WTC11 (cell line): ENCODE measurements at regions of chr21 and their contacts with region 1.

Region 1: GRCh38 chr21:45140346-45140940 is 66.1 kb downstream of the ADARB1 start:
- DNase-seq: peak; percentile 85
- ATAC-seq: peak; percentile 95
- H3K4me3 Mint-ChIP-seq: no peak overlapping the region
- H3K27ac Mint-ChIP-seq: no peak overlapping the region
- H3K4me1 Mint-ChIP-seq: peaks cover 3% of the 10 kb centered on the region; the same call in 1 of the 2 replicates
- H3K27me3 Mint-ChIP-seq: no peaks in the 10 kb centered on the region
- CTCF ChIP-seq: peak; percentile 54; the same call in 1 of the 2 replicates

Region 2: DNA sequence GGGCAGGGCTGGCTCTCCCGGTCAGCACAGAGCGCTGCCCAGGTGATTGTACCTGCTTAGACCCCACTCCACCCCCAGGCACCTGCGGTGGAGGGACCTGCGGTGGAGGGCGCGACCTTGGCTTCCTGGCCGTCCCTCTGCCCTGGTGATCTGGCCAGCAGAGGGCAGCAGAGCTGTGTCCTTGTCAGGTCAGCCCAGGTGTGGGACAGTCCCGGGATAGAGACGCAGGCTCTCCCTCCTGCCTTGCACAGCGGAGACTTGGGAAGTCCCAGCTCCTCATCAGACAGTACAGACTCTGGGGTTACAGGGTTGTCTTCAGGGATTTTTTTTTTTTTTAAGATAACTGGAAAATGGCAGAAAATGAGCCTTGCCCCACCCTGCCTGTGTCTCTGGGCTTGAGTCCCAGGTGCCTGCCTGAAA is 190.7 kb before region 1 on chr21:
- CTCF ChIA-PET with region 1: interaction called, 58 read pairs
- POLR2A ChIA-PET with region 1: no interaction called
- DNase-seq: peak; percentile 97
- ATAC-seq: peak; percentile 94
- H3K4me3 Mint-ChIP-seq: no peak overlapping the region
- H3K27ac Mint-ChIP-seq: peak overlapping the region; percentile 45; the same call in 1 of the 2 replicates
- H3K4me1 Mint-ChIP-seq: 0 out of 2 replicates have a peak, but pooled peaks cover 2% of the 10 kb centered on the region
- H3K27me3 Mint-ChIP-seq: no peaks in the 10 kb centered on the region
- CTCF ChIP-seq: peak; percentile 88

Region 3: GRCh38 chr21:45050786-45051489 is 89.5 kb before region 1 on chr21:
- CTCF ChIA-PET with region 1: interaction called, 14 read pairs
- POLR2A ChIA-PET with region 1: no interaction called
- DNase-seq: no peak
- ATAC-seq: no peak
- H3K4me3 Mint-ChIP-seq: no peak overlapping the region
- H3K27ac Mint-ChIP-seq: no peak overlapping the region
- H3K4me1 Mint-ChIP-seq: peaks cover 18% of the 10 kb centered on the region
- H3K27me3 Mint-ChIP-seq: peaks cover 14% of the 10 kb centered on the region
- CTCF ChIP-seq: no peak

Region 4: GRCh38 chr21:45120975-45121374 is 19.5 kb before region 1 on chr21:
- CTCF ChIA-PET with region 1: interaction called, 27 read pairs
- POLR2A ChIA-PET with region 1: no interaction called
- DNase-seq: no peak
- ATAC-seq: no peak
- H3K4me3 Mint-ChIP-seq: no peak overlapping the region
- H3K27ac Mint-ChIP-seq: no peak overlapping the region
- H3K4me1 Mint-ChIP-seq: peaks cover 2% of the 10 kb centered on the region; the same call in 1 of the 2 replicates
- H3K27me3 Mint-ChIP-seq: no peaks in the 10 kb centered on the region
- CTCF ChIP-seq: no peak

Region 5: DNA sequence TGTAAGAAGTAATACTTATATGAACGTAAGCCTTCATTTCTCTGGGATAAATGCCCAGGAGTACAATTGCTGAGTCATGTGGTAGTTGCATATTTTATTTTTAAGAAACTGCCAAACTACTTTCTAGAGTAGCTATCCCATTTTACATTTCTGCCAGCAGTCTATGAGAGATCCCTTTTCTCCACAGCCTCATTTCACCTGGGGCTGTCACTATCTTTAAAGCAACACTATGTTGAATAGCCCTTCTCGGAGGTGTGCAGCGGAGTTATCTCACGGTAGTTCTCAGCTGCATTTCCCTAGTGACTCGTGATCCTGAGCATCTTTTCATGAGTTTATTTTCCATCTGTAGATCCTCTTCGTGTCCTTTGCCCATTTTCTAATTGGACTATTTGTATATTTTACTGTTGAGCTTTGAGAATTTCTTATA is 27.4 kb after region 1 on chr21:
- CTCF ChIA-PET with region 1: interaction called, 13 read pairs
- POLR2A ChIA-PET with region 1: no interaction called
- DNase-seq: no peak
- ATAC-seq: no peak
- H3K4me3 Mint-ChIP-seq: no peak overlapping the region
- H3K27ac Mint-ChIP-seq: no peak overlapping the region
- H3K4me1 Mint-ChIP-seq: no peaks in the 10 kb centered on the region
- H3K27me3 Mint-ChIP-seq: no peaks in the 10 kb centered on the region
- CTCF ChIP-seq: no peak

Region 6: DNA sequence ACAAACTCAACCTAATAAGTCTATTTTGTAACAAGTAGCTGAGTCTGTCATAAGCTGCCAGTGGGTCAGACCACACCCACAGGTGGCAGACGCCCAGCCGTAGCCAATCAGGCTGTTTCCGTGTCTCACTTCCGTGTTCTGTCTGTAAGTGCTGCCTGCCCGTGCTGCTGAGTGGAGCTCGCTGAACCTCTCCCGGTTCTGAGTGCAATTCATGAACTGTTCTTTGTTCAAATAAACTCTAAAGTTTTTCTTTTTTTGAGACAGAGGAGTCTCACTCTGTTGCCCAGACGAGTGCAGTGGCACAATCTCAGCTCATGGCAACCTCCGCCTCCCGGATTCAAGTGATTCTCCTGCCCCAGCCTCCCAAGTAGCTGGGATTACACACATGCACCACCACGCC is 122.2 kb after region 1 on chr21:
- CTCF ChIA-PET with region 1: interaction called, 16 read pairs
- POLR2A ChIA-PET with region 1: no interaction called
- DNase-seq: no peak
- ATAC-seq: no peak
- H3K4me3 Mint-ChIP-seq: no peak overlapping the region
- H3K27ac Mint-ChIP-seq: no peak overlapping the region
- H3K4me1 Mint-ChIP-seq: no peaks in the 10 kb centered on the region
- H3K27me3 Mint-ChIP-seq: no peaks in the 10 kb centered on the region
- CTCF ChIP-seq: no peak

Region 7: GRCh38 chr21:45366931-45367401 is 226.5 kb after region 1 on chr21:
- CTCF ChIA-PET with region 1: no interaction called
- POLR2A ChIA-PET with region 1: no interaction called
- DNase-seq: no peak
- ATAC-seq: no peak
- H3K4me3 Mint-ChIP-seq: no peak overlapping the region
- H3K27ac Mint-ChIP-seq: peak overlapping the region; percentile 81; the same call in 1 of the 2 replicates
- H3K4me1 Mint-ChIP-seq: peaks cover 37% of the 10 kb centered on the region
- H3K27me3 Mint-ChIP-seq: no peaks in the 10 kb centered on the region; the same call in 1 of the 2 replicates
- CTCF ChIP-seq: no peak

Region 8: DNA sequence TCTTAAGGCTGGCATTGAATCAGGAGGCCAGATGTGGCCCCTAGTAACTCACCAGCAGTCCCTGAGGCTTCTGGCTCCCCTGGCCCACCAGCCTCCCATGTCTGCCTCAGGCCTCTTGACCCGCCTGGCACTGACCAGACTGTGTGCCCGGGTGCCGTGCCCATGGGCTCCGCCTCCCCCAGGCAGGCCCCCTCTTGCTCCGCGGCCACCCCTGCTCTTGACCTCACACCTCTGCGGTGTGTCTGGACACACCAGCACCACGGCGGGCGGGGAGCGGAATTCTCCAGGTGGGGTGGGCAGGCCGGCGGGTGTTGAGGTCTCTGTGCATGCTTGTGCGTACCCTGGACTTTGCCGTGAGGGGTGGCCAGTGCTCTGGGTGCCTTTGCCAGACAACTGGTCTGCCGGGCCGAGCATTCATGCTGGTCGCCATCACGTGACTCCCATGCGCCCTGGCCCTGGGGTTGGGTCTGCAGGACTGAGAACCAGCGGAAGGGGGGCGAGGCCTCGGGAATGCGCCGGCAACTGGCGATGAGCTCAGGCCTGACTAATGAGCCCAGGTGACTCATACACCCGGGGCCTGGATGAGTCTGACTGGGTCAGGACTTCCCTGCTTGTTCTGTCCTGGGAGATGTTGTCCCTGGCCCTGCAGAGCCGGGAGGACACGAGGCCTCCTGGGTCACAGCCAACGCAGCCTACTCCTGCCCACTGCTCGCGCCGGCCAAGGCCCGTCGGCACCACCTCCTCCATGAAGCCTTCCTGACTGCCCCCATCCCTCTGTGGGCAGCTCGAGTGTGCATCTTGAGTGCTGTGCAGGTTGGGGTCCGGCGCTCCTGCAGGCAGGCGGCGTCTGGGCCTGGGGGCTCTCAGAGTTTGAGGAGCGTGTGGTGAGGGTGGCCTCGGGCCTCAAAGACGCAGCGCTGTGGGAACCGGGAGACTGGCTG is 287.2 kb after region 1 on chr21:
- CTCF ChIA-PET with region 1: no interaction called
- POLR2A ChIA-PET with region 1: no interaction called
- DNase-seq: peak; percentile 66
- ATAC-seq: peak; percentile 46
- H3K4me3 Mint-ChIP-seq: no peak overlapping the region
- H3K27ac Mint-ChIP-seq: peak overlapping the region; percentile 70
- H3K4me1 Mint-ChIP-seq: peaks cover 41% of the 10 kb centered on the region
- H3K27me3 Mint-ChIP-seq: no peaks in the 10 kb centered on the region
- CTCF ChIP-seq: no peak